ENCODE measurements at regions of chr15 and their contacts with region 1.

Region 1: DNA sequence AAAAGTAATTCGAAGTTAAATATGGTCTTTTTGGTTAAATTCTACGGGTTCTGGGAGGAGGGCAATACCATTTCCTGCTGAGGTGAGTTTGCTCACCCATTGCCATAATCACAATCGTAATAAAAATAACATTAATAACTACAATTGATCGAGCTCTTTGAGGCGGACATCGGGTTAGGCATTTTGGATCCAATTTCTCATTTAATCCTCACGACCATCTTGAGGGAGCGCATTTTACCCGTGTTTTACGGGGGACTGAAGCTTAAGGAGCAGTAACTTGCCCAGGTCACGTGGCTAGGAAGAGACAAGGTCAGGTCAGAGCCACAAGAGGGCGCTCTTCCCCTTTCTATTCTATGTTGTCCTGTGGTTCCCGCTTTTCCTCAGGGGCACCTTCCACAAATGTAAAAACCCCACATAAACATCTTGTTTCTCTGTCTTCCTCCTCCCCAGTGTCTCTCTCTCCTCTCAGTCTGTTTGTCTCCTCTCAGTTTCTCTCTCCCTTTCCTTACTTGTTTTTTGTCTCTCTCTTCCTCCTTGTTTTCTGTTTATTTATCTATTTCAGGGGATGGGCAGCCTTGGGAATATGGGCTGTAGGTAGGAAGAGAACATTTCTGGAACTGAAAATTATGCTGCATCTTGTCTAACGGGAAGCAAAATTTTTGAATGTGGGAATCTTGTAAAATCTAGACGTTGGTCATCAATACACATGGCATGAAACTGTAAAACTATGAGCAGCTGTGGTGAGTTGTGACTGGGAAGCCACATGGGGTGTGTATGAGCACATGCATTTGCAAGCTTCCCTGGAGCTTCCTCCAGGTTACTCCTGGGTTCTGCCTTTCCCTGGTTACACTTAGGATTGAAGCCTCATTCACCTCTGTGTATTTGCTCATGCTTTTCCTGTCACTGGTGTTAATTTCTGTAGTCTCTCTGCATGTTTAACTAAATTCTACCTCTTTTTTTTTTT is 71.0 kb downstream of the SQOR start:
- DNase-seq: peak in 4 of 5 donors; percentile 49 to 74 (median 68)
- ATAC-seq: peak; percentile 82 to 94 (median 90)
- H3K4me3 ChIP-seq: peak overlapping the region; percentile 20 to 66 (median 54)
- H3K27ac ChIP-seq: peak overlapping the region in 1 of 12 donors; percentile 35
- H3K4me1 ChIP-seq: peaks cover 0 to 13% (median 4%) of the 10 kb centered on the region in 12 donors
- H3K27me3 ChIP-seq: peaks cover 0 to 15% (median 0%) of the 10 kb centered on the region in 9 donors
- CTCF ChIP-seq: peak; percentile 84 to 97 (median 91)
- POLR2A ChIP-seq: no peak

Region 2: GRCh38 chr15:45790325-45790943 is 84.6 kb after region 1 on chr15:
- intact Hi-C with region 1: loop called in 1 of 10 experiments (anchors 2 kb)
- DNase-seq: peak in 1 of 5 donors; percentile 25
- ATAC-seq: peak in 3 of 4 donors; percentile 55 to 72 (median 69)
- H3K4me3 ChIP-seq: no peak overlapping the region
- H3K27ac ChIP-seq: no peak overlapping the region
- H3K4me1 ChIP-seq: no peaks in the 10 kb centered on the region
- H3K27me3 ChIP-seq: peaks cover 0 to 8% (median 0%) of the 10 kb centered on the region in 9 donors
- CTCF ChIP-seq: peak; percentile 43 to 76 (median 62)
- POLR2A ChIP-seq: no peak

Region 3: DNA sequence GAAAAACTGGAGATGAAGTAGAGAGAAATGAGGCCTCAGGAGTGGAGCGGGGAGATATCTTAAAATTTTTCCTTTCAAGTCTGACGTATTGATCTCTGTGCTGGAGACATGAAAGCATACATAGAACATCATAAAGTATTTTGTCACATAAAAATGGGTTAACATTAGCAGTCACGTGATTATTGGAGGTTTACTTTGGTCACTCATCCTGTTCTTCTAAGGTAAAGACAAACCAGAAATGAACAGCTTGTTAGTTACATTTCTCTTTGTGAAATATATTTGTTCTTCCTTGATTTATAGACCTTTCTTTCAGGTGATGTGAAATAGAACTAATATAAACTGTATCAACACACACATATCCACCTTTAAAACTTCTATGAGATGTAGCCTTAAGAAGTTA is 253.1 kb after region 1 on chr15:
- intact Hi-C with region 1: loop called in 1 of 10 experiments (anchors 10 kb)
- DNase-seq: no peak
- ATAC-seq: no peak
- H3K4me3 ChIP-seq: no peak overlapping the region
- H3K27ac ChIP-seq: no peak overlapping the region
- H3K4me1 ChIP-seq: no peaks in the 10 kb centered on the region
- H3K27me3 ChIP-seq: no peaks in the 10 kb centered on the region
- CTCF ChIP-seq: no peak
- POLR2A ChIP-seq: no peak

Region 4: DNA sequence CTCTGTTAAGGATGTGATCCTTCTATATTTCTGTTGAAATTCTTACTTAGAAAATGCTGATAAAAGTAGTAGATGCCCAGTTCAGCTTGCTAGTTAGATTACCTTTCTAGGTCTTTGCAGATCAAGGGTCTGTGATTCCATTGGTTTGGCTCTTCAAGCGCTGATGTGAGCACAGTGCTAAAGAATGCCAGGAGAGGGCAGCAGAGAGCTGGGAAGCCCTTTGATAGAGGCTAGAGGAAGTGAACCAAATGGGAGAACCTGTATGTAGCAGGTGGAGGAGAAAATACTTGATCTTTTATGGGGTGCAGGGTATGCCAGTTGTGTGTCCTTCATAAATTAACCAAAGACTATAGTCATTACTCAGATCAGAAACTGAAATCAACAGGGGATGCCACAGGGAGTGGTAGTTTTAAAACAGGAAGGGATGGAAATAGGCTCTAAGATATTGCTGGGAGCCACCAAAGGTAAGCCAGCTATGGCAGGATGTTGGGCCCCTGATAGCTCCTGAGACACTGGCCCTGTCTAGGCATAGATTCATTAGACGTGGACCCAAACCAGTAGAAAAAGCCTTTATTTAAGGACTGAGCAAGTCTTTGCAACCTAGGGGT is 606.4 kb after region 1 on chr15:
- intact Hi-C with region 1: loop called in 3 of 10 experiments (anchors 10 kb)
- DNase-seq: peak in 4 of 5 donors; percentile 52 to 67 (median 59)
- ATAC-seq: peak; percentile 47 to 94 (median 85)
- H3K4me3 ChIP-seq: no peak overlapping the region
- H3K27ac ChIP-seq: no peak overlapping the region
- H3K4me1 ChIP-seq: peaks cover 0 to 21% (median 0%) of the 10 kb centered on the region in 12 donors
- H3K27me3 ChIP-seq: no peaks in the 10 kb centered on the region
- CTCF ChIP-seq: peak; percentile 81 to 96 (median 87)
- POLR2A ChIP-seq: no peak